Dendritic cell treated with granulocyte-macrophage colony-stimulating factor and Interleukin-4, amounts not matched to agents 40 ng/mL and 50 ng/mL, for 4 days (primary cell): ENCODE measurements at regions of chr18 and their contacts with region 1.

Region 1: GRCh38 chr18:63505566-63506335 is 29.0 kb downstream of the SERPINB5 start:
- H3K4me3 Mint-ChIP-seq: no peak overlapping the region
- H3K27ac Mint-ChIP-seq: no peak overlapping the region
- H3K4me1 Mint-ChIP-seq: no peaks in the 10 kb centered on the region
- H3K27me3 Mint-ChIP-seq: peaks cover 3% of the 10 kb centered on the region

Region 2: GRCh38 chr18:63253428-63254372 is 252.1 kb before region 1 on chr18:
- intact Hi-C with region 1: no loop called
- H3K4me3 Mint-ChIP-seq: no peak overlapping the region
- H3K27ac Mint-ChIP-seq: no peak overlapping the region
- H3K4me1 Mint-ChIP-seq: peaks cover 43% of the 10 kb centered on the region
- H3K27me3 Mint-ChIP-seq: no peaks in the 10 kb centered on the region

Region 3: GRCh38 chr18:63339920-63340484 is 165.7 kb before region 1 on chr18:
- intact Hi-C with region 1: loop called (anchors 10 kb)
- H3K4me3 Mint-ChIP-seq: no peak overlapping the region
- H3K27ac Mint-ChIP-seq: no peak overlapping the region
- H3K4me1 Mint-ChIP-seq: peaks cover 2% of the 10 kb centered on the region
- H3K27me3 Mint-ChIP-seq: no peaks in the 10 kb centered on the region

Region 4: GRCh38 chr18:63562284-63562683 is 56.5 kb after region 1 on chr18:
- intact Hi-C with region 1: no loop called
- H3K4me3 Mint-ChIP-seq: no peak overlapping the region
- H3K27ac Mint-ChIP-seq: no peak overlapping the region
- H3K4me1 Mint-ChIP-seq: peaks cover 10% of the 10 kb centered on the region
- H3K27me3 Mint-ChIP-seq: no peaks in the 10 kb centered on the region

Region 5: DNA sequence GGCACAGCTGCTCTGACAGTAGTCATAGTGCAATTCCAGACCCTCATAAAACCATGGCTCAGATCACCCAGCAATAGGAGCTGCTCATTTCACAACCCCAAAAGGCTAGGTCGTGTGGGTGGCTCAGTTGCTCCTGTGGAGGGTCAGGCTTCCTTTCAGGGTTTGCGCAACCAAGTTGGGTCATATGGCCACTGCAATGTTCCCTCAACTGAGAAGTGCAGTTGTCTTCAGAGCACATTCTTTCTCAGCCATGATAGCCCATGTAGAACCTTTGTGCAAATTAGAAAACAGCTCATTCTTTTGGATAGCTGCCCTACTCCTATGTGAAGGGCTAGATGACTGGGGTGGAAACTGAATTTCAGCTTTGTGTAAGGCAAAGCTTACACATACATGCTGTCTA is 84.6 kb after region 1 on chr18:
- intact Hi-C with region 1: no loop called
- H3K4me3 Mint-ChIP-seq: no peak overlapping the region
- H3K27ac Mint-ChIP-seq: no peak overlapping the region
- H3K4me1 Mint-ChIP-seq: peaks cover 41% of the 10 kb centered on the region
- H3K27me3 Mint-ChIP-seq: no peaks in the 10 kb centered on the region